ENCODE measurements at regions of chr20 and their contacts with region 1.

Region 1: GRCh38 chr20:36886859-36887751 is 11.2 kb downstream of the TLDC2 start:
- DNase-seq: peak; percentile 66 to 91
- H3K4me3 ChIP-seq: no peak overlapping the region
- H3K27ac ChIP-seq: no peak overlapping the region
- H3K4me1 ChIP-seq: no peaks in the 10 kb centered on the region; the same call in 1 of the 2 replicates
- H3K27me3 ChIP-seq: no peaks in the 10 kb centered on the region
- CTCF ChIP-seq: peak; percentile 94

Region 2: DNA sequence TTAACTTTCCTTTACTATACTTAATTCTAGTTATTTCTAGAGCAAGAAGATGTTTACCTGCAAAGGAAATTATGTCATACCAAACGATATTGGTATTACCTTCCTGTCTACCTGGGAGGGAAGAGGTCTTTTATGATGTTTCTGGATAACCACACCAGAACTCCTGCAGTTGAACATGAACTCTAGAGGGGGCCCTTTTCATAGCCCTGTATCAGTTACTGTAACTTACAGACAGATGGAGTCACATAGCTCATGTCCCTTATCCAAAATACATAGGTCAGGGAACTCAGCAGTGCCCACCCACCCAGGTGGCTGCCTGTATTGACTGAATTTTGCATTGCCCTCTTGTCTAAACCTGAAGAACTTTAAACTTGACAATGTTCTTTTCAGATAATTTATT is 380.9 kb before region 1 on chr20:
- CTCF ChIA-PET with region 1: no interaction called
- POLR2A ChIA-PET with region 1: no interaction called
- intact Hi-C with region 1: loop called (anchors 10 kb)
- DNase-seq: peak in 1 of 2 experiments; percentile 39
- H3K4me3 ChIP-seq: no peak overlapping the region
- H3K27ac ChIP-seq: no peak overlapping the region
- H3K4me1 ChIP-seq: no peaks in the 10 kb centered on the region
- H3K27me3 ChIP-seq: no peaks in the 10 kb centered on the region
- CTCF ChIP-seq: peak; percentile 54

Region 3: DNA sequence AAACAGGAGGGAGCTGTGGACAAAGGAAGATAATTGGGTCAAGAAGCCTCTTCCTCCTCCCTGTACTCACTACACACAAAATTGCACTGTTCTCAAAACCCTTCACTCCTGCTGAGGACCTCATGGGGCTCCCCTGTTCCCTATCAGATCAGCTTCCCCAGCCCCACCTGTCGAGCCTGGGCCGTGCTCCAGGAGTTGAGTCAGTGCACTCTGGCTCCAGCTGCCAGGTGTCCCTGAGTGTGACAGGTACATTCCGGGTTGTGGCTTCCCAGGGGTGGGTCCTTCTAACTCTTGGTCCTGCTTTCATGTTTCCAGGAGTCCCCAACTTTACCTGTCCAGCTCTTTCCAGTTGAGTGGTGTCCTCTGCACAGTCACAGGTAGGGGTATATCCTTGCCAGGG is 273.1 kb before region 1 on chr20:
- CTCF ChIA-PET with region 1: interaction called, 5 read pairs
- POLR2A ChIA-PET with region 1: no interaction called
- intact Hi-C with region 1: loop called (anchors 2 kb)
- DNase-seq: peak; percentile 61 to 80
- H3K4me3 ChIP-seq: no peak overlapping the region
- H3K27ac ChIP-seq: no peak overlapping the region
- H3K4me1 ChIP-seq: no peaks in the 10 kb centered on the region
- H3K27me3 ChIP-seq: no peaks in the 10 kb centered on the region
- CTCF ChIP-seq: no peak

Region 4: GRCh38 chr20:36792422-36792821 is 94.7 kb before region 1 on chr20:
- CTCF ChIA-PET with region 1: interaction called, 4 read pairs
- POLR2A ChIA-PET with region 1: no interaction called
- intact Hi-C with region 1: loop called (anchors 1 kb)
- DNase-seq: peak; percentile 85 to 87
- H3K4me3 ChIP-seq: no peak overlapping the region
- H3K27ac ChIP-seq: no peak overlapping the region
- H3K4me1 ChIP-seq: no peaks in the 10 kb centered on the region
- H3K27me3 ChIP-seq: no peaks in the 10 kb centered on the region
- CTCF ChIP-seq: peak; percentile 66

Region 5: DNA sequence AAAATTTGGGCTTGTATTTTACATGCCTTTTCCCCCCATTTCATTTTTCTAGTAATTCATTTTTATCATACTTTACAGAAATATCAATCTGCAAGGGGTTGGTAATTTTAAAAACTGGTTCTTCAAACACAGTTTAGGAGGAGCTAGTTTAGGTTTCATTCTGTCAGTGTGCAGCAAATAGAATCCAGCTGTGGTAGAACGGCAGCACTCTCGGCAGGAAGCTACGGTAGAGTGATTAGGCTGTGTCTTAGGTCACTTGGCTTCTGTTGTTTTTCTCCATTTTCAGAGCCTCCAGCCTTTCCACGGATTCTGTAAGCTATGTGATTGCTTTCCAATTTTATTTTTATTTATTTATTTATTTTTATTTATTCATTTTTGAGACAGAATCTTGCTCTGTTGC is 21.5 kb after region 1 on chr20:
- CTCF ChIA-PET with region 1: no interaction called
- POLR2A ChIA-PET with region 1: no interaction called
- intact Hi-C with region 1: no loop called
- DNase-seq: no peak
- H3K4me3 ChIP-seq: no peak overlapping the region
- H3K27ac ChIP-seq: no peak overlapping the region
- H3K4me1 ChIP-seq: no peaks in the 10 kb centered on the region
- H3K27me3 ChIP-seq: no peaks in the 10 kb centered on the region
- CTCF ChIP-seq: no peak